ENCODE measurements at regions of chr21 and their contacts with region 1.

Region 1: DNA sequence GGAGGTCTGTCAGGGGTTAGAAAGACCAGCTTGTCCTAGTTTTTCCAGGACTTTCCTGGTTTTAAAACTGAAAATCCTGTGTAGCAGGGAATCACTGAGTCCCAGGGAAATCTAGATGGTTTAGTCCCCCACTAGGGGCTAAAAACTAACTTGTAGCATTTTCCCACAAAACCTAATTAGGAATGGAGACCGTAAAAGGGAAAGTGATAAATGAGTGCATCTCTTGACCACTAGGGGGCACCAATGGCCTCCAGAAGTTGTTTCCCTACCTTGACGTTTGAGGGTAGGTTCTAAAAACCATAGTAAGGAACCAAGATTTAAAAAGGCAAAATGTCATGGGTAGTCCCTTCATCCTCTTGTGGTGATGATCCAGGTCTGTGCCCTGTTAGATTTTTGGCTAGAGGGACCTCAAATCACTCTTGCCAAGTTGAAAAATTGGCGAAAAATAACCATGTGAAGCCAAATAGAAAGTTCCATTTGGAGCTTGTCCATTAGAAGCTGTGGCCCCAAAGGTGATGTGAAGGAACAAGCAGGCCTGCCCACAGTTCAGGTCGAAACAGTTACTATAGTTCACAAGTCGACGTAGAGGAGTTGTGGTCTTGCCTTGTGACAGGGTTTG is 24.5 kb downstream of the CLIC6 start:
- DNase-seq: peak in 27 of 35 experiments; percentile 7 to 78 (median 35)
- ATAC-seq: peak in 3 of 4 experiments; percentile 35 to 57 (median 50)
- H3K4me3 ChIP-seq: no peak overlapping the region
- H3K4me3 Mint-ChIP-seq: no peak overlapping the region
- H3K27ac ChIP-seq: no peak overlapping the region
- H3K27ac Mint-ChIP-seq: no peak overlapping the region
- H3K4me1 ChIP-seq: no peaks in the 10 kb centered on the region
- H3K4me1 Mint-ChIP-seq: peaks cover 0 to 6% (median 2%) of the 10 kb centered on the region in 3 donors
- H3K27me3 ChIP-seq: peaks cover 0 to 6% of the 10 kb centered on the region in 2 experiments
- H3K27me3 Mint-ChIP-seq: peaks cover 15 to 25% of the 10 kb centered on the region in 2 donors

Region 2: GRCh38 chr21:35840197-35840799 is 1147.0 kb after region 1 on chr21:
- CTCF ChIA-PET with region 1: interaction called, 4 to 22 read pairs
- POLR2A ChIA-PET with region 1: no interaction called
- DNase-seq: peak in 32 of 35 experiments; percentile 9 to 76 (median 39)
- ATAC-seq: peak in 1 of 4 experiments; percentile 33
- H3K4me3 ChIP-seq: no peak overlapping the region
- H3K4me3 Mint-ChIP-seq: no peak overlapping the region
- H3K27ac ChIP-seq: no peak overlapping the region
- H3K27ac Mint-ChIP-seq: no peak overlapping the region
- H3K4me1 ChIP-seq: peaks cover 0 to 3% of the 10 kb centered on the region in 2 experiments
- H3K4me1 Mint-ChIP-seq: peaks cover 4 to 6% (median 4%) of the 10 kb centered on the region in 3 donors
- H3K27me3 ChIP-seq: peaks cover 0 to 6% of the 10 kb centered on the region in 2 experiments
- H3K27me3 Mint-ChIP-seq: peaks cover 0 to 1% of the 10 kb centered on the region in 2 donors